Kidney (tissue), 22 donors: ENCODE measurements at regions of chr17 and their contacts with region 1.

Region 1: GRCh38 chr17:82751571-82752370 is at the start of gene TBCD:
- DNase-seq: peak; percentile 94 to 96 (median 95)
- H3K4me3 ChIP-seq: peak within 1 kb of the TSS; percentile 56 to 74 (median 62)
- H3K27ac ChIP-seq: peak within 1 kb of the TSS; percentile 76 to 81
- H3K4me1 ChIP-seq: peaks cover 0 to 8% (median 5%) of the 10 kb centered on the region in 3 donors
- H3K27me3 ChIP-seq: no peaks in the 10 kb centered on the region
- CTCF ChIP-seq: no peak
- total RNA-seq, gene TBCD: 72.8 TPM

Region 2: DNA sequence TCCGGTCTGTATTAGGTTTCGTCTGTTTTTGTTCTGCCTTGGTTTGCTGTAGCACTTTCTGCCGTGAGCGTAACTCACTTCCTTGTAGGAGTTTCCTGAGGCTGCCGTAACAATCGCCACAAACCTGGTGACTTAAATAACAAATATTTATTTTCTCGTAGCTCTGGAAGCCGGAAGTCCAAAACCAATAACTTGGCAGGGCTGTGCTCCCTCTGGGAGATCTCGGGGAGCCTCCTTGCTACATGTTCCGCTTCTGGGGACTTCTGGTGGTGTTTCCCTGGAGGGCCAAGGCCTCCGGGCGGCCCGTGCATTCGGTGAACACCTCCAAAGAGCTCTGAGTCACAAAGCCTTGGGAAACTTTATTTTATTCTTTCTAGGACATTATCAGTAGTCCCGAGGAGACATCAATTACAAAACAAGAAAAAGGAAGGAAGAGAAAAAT is 96.7 kb before region 1 on chr17:
- intact Hi-C with region 1: loop called (anchors 10 kb)
- DNase-seq: no peak
- H3K4me3 ChIP-seq: no peak overlapping the region
- H3K27ac ChIP-seq: peak overlapping the region in 1 of 2 donors; percentile 32
- H3K4me1 ChIP-seq: peaks cover 0 to 1% (median 0%) of the 10 kb centered on the region in 3 donors
- H3K27me3 ChIP-seq: no peaks in the 10 kb centered on the region
- CTCF ChIP-seq: no peak

Region 3: DNA sequence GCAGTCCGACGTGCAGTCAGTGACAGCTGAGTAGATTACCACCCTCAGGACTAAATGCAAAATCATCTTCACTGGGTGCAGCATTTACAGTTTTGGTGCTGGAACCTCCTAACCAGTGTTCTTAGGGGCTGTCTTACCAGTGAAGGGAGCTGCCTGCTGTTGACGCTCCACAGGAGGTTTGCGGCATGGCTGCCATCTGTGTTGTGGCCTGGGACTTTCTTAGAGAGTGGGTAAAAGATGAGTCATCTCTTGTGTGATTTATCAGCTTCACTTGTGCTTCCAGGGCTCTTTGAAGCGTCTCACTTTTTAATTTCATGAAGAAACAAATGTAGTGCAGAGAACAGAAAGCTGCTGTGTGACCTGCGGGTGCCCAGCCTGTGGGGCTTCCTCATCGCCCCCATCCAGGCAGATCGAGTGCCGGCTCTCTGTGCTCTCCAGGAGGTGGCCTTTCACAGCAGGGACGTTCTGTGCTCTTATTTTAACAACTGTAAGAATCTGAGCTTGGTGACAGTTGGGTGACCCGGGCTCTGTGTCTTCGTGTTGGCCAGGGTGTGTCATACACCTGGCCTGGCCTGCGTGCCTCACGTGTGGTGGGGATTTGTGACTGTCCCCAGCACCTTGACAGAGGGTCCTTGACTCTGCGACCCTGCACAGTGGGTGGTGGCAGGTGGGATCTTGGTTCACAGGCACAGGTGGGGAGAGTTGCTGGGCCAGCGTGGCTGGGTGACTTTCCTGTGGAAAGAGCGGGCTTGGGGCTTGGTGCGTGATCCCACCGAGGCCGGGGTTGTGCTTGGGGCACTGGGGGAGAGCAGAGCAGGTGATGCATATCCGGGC is 112.4 kb after region 1 on chr17:
- intact Hi-C with region 1: no loop called
- DNase-seq: peak in 1 of 5 donors; percentile 37
- H3K4me3 ChIP-seq: no peak overlapping the region
- H3K27ac ChIP-seq: no peak overlapping the region
- H3K4me1 ChIP-seq: peaks cover 3 to 23% (median 14%) of the 10 kb centered on the region in 3 donors
- H3K27me3 ChIP-seq: no peaks in the 10 kb centered on the region
- CTCF ChIP-seq: no peak